ENCODE measurements at regions of chr3 and their contacts with region 1.

Region 1: DNA sequence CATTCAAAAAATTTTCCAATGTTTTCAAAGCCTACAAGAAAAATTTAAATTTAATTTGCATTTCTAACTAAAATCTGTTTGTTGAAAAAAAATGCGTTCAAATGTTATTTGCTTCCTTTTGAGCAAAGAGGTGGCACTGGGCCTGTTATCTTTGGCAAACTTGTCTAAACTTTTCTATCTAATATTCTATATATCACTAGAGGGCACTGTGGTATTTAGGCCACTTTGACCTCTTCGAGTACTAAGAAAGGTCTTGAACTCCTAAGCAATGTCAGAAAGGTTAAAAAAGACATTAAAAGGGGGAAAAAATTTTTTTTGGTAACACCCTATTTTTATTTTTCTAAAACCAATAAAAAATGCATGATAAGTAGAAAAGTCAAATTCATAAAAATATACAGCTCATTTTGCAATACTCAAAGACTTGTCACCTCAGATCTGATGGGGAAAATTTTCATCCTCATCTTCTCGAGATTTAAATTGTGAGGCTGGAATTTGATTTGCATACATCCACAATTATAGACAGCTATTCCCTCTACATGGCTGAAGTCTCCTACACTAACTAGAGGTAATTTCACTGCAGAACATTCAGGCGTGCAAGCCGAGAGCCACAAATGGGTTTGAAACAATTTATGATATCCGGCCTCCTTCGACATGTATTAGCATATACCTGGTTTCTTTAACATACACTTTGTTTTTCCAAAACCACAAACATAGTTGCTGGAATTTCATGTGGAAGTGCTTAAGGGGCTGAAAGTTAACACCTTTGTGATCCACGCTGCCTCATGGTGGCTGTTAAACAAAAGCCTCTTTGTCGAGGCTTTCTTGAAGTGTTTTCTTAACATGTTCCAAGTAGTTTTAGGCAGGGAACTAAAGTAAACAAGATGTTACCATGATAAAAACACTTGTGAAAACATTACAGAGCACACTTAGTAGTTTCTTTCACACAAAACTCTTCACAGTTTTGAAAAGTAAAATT is 576.4 kb downstream of the FOXP1 start:
- DNase-seq: no peak
- H3K4me3 Mint-ChIP-seq: no peak overlapping the region
- H3K27ac Mint-ChIP-seq: peak overlapping the region; percentile 12
- H3K4me1 Mint-ChIP-seq: peaks cover 54% of the 10 kb centered on the region
- H3K27me3 Mint-ChIP-seq: no peaks in the 10 kb centered on the region

Region 2: DNA sequence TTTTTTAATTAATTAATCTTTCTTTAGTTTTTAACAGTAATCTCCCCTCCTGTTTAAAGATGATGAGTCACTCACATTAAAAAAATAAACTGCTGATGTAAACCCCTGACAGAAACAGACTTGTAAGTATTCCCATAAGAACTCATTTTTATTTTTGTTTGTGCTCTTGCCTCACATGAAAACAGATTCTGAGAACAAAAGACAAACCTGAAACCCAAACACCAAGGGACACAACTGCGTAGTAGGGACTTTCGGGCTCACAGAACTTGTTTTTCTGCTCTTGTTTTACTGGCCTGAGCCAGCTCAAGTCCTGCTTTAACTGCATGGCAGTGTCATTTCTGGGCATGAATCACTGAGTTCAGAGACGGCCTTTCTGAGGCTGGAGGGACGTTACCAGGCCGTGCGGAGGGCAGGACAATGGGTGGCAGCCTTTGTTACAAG is 24.4 kb before region 1 on chr3:
- intact Hi-C with region 1: loop called (anchors 1 kb)
- DNase-seq: peak; percentile 75
- H3K4me3 Mint-ChIP-seq: peak overlapping the region; percentile 55
- H3K27ac Mint-ChIP-seq: peak overlapping the region; percentile 91
- H3K4me1 Mint-ChIP-seq: peaks cover 50% of the 10 kb centered on the region
- H3K27me3 Mint-ChIP-seq: no peaks in the 10 kb centered on the region

Region 3: DNA sequence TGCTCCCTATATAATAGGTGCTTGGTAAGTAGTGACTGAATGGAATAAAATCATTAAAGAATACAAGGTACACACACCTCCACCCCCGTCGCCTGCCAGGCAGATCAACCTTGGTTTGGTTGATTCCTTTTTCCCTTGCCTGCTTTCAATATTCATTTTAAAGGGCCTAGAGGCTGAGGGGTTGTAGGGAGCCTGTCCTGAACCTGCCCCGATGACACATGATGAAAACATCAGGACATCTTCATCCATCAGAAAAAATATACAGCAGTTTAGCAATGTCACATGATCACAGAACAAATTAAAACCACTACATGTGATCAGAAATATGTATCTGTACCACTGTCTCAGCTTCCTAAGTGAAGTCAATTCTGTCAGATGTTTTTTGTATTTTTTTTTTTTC is 12.5 kb before region 1 on chr3:
- intact Hi-C with region 1: no loop called
- DNase-seq: no peak
- H3K4me3 Mint-ChIP-seq: no peak overlapping the region
- H3K27ac Mint-ChIP-seq: no peak overlapping the region
- H3K4me1 Mint-ChIP-seq: peaks cover 25% of the 10 kb centered on the region
- H3K27me3 Mint-ChIP-seq: no peaks in the 10 kb centered on the region

Region 4: DNA sequence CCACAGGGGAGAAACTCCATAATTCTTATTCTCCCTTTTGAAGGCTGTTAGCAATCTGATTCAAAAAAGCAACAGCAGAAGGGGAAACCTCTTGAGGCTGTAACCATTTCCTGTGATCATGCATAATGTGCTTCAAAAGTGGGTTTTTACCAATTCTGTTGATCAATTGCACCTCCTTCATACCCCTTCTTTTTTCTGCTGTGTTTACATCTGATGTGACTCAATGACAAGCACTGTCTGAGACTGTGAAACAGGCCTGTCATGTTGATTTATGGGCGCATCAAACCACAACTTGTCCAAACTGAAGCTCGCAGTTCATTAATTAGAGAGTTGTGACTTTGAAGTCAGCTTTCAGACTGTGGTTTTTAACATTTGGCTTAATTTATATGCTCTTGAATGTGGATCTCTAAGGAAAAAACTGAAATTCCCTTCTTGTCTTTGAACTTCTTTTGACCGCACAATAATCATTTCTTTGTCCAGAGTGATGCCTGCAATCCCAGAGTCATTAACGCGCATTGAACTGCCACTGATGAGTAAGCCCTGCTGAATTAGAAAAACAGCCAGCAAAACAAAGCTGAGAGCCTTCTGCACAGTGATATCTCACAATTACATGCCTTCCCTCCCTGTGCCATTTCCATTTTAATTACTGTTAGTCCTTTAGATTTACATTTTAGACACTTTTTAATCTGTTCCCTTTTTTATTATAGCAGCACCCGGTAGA is 43.6 kb after region 1 on chr3:
- intact Hi-C with region 1: loop called (anchors 1 kb)
- DNase-seq: peak; percentile 79
- H3K4me3 Mint-ChIP-seq: peak overlapping the region; percentile 46
- H3K27ac Mint-ChIP-seq: peak overlapping the region; percentile 72
- H3K4me1 Mint-ChIP-seq: peaks cover 75% of the 10 kb centered on the region
- H3K27me3 Mint-ChIP-seq: no peaks in the 10 kb centered on the region

Region 5: DNA sequence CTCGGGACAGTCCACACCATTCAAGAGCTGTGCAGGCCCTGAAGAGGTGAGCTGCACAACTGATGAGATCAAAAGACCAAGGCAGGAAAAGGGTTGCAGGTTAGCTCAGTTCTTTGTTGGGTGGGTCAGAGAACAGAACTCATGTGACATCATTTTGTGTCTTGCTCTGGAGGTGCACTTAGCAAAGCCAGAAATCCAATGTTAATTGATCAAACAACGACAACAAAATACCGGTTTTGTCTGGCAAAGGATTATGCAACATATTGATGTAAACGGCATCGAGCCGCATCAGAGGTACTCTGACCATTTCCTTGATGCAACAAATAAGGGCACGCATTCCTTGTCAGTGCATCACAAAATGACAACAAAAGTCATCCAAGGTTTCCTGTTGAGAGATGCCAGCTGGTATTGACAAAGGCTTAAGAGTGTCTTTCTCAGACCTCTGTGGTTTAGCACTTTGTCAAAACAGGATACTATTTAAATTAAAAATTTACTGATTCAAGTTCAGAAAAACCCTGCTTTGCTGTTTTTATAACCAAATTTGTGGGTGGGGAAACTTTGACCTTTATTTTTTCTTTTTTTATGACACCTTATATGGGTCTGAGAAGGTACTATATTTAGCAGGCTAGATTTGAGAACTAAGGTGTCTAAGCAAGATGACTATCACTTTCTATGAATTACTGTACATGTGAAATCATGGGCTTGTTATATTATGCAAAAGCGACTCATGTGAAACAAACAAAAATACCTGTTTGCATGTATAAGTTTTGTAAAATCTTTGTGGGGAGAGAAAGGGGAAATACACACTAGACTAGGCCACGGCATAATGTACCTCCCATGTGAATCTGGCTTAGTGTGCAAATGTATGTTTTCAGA is 80.3 kb after region 1 on chr3:
- intact Hi-C with region 1: loop called (anchors 1 kb)
- DNase-seq: peak; percentile 83
- H3K4me3 Mint-ChIP-seq: peak overlapping the region; percentile 62
- H3K27ac Mint-ChIP-seq: peak overlapping the region; percentile 91
- H3K4me1 Mint-ChIP-seq: peaks cover 70% of the 10 kb centered on the region
- H3K27me3 Mint-ChIP-seq: no peaks in the 10 kb centered on the region

Region 6: GRCh38 chr3:71226565-71227269 is 219.6 kb after region 1 on chr3:
- intact Hi-C with region 1: loop called (anchors 1 kb)
- DNase-seq: peak; percentile 94
- H3K4me3 Mint-ChIP-seq: peak overlapping the region; percentile 85
- H3K27ac Mint-ChIP-seq: peak overlapping the region; percentile 95
- H3K4me1 Mint-ChIP-seq: peaks cover 41% of the 10 kb centered on the region
- H3K27me3 Mint-ChIP-seq: peaks cover 35% of the 10 kb centered on the region

Region 7: DNA sequence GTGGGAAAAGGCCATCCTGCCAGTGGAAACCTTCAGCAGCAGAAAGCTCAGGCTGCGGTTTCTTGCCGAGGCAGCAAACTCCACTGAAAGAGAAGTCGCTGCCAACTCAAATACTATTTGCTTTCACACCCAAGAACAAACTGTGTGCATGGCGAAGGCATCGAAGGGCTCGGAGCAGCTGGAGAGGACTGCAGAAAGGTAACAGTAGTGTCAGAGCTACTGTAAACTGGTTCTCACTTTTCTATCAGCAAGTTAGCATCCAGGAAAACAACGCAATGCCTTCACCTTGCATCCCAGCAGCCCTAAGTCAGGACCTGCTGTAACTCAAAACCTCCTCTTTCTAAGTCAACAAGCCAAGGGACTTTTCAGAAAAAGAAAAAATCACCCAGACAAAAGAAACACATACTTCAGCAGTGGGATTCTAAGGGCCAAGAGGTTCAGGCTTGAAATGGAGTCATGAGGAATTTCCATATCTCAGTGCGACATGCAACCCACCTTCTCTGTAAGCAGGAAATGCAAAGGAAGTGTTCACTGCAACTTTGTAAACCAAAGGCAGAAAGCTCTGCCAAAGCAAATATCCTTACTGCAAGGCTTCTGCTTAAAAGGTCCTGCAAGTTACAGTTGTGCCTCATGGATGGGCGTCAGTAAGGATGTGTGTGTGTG is 382.9 kb after region 1 on chr3:
- intact Hi-C with region 1: loop called (anchors 2 kb)
- DNase-seq: peak; percentile 69
- H3K4me3 Mint-ChIP-seq: peak overlapping the region; percentile 46
- H3K27ac Mint-ChIP-seq: peak overlapping the region; percentile 62
- H3K4me1 Mint-ChIP-seq: peaks cover 34% of the 10 kb centered on the region
- H3K27me3 Mint-ChIP-seq: peaks cover 31% of the 10 kb centered on the region

Region 8: DNA sequence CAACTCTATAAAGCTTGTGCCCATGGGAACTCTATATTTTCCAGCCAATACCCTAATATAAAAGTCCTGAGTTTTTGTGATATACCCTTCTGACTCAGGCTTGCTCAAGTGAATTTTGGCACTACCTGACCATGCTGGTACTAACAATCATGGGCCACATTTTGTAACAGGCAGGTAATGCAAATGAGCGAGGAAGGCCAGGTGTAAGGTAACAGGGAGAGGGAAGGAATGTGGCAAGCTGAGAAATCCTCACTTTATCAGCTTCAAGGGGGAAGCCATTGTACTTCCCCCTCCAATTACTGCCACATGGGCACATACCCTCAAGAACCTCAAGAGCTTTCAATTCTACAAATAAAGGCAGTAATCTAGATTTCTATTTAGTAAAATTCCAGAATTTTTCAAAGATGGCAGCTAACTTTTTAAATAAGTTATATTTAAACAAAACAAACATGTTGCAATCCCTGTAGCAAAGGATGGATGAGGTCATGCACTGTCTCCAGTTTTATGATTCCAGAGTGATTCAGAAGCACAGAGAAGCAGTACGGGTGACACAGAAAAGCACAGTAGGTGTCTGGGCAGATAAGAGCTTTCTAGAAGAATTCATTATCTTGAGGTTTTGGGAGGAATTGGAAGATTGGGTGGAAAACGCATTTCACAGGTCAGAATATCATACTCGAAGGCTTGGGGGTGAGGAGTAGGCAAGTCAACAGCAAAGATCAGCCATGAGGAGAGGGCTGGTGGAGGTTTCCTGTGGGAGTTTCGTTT is 488.8 kb after region 1 on chr3:
- intact Hi-C with region 1: loop called (anchors 5 kb)
- DNase-seq: peak; percentile 77
- H3K4me3 Mint-ChIP-seq: peak overlapping the region; percentile 71
- H3K27ac Mint-ChIP-seq: peak overlapping the region; percentile 81
- H3K4me1 Mint-ChIP-seq: peaks cover 50% of the 10 kb centered on the region
- H3K27me3 Mint-ChIP-seq: peaks cover 4% of the 10 kb centered on the region

Measured in activated CD4-positive, alpha-beta T cell treated with anti-CD3 and anti-CD28 coated beads, Interleukin-2, amount 10 ng/mL, durations not matched to agents 24 days and 14 days (primary cell).